Heart right ventricle (tissue), 16 donors: ENCODE measurements at regions of chr3 and their contacts with region 1.

Region 1: DNA sequence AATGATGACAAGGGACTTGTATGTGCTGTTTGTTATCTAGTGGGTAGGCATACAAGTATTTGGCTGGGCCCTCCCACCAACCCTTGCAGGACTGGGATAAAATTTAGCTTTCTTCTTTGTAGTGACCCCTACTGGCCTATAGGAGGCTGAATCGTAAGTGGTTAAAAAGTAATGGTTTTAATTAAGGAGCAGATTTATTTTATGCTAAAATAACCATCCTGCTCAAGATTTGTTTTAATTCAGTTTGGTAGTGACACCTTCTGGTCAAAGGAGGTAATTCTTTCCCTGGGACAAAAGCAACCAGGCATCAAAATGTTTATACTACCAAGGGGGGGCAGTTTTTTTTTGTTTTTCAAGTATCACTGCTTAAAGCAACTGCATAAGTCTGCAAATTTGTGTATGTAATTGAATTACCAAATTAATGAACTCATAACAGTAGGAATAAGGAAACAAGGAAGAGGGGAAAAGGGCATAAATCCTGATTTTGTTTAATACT is 70.7 kb downstream of the TOP2B start:
- DNase-seq: peak in 1 of 2 donors; percentile 27
- ATAC-seq: peak; percentile 49 to 76 (median 55)
- H3K4me3 ChIP-seq: no peak overlapping the region
- H3K27ac ChIP-seq: peak overlapping the region in 8 of 10 donors; percentile 27 to 80 (median 64)
- H3K4me1 ChIP-seq: peaks cover 5 to 50% (median 45%) of the 10 kb centered on the region in 9 donors
- H3K27me3 ChIP-seq: no peaks in the 10 kb centered on the region
- CTCF ChIP-seq: peak; percentile 76 to 90 (median 82)

Region 2: GRCh38 chr3:24963762-24964625 is 630.1 kb before region 1 on chr3:
- intact Hi-C with region 1: loop called in 9 of 10 experiments (anchors 2 to 10 kb)
- DNase-seq: no peak
- ATAC-seq: peak in 1 of 8 donors; percentile 61
- H3K4me3 ChIP-seq: no peak overlapping the region
- H3K27ac ChIP-seq: no peak overlapping the region
- H3K4me1 ChIP-seq: no peaks in the 10 kb centered on the region
- H3K27me3 ChIP-seq: no peaks in the 10 kb centered on the region
- CTCF ChIP-seq: peak in 8 of 9 donors; percentile 44 to 71 (median 64)

Region 3: DNA sequence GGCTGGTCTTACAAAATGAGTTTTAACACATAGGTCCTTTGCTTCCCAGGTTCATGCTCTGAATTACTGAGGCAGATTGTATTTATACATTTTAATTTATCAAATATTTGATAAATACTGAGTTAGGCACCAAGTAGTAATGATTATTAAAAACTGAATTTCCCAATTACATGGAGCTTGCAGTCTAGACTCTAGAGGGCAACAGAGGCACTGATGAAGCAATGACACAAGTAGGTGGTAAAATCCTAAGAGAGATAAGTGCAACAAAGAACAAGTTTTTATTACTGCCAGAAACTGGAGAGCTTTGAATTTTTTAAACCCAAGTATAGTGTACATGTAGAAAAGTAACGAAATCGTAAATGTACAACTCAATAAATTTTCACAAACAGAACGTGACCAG is 572.2 kb before region 1 on chr3:
- intact Hi-C with region 1: loop called in 7 of 10 experiments (anchors 5 to 10 kb)
- DNase-seq: no peak
- ATAC-seq: peak in 4 of 8 donors; percentile 44 to 61 (median 59)
- H3K4me3 ChIP-seq: no peak overlapping the region
- H3K27ac ChIP-seq: no peak overlapping the region
- H3K4me1 ChIP-seq: no peaks in the 10 kb centered on the region
- H3K27me3 ChIP-seq: no peaks in the 10 kb centered on the region
- CTCF ChIP-seq: peak in 8 of 9 donors; percentile 30 to 74 (median 62)

Region 4: GRCh38 chr3:25044762-25045710 is 549.0 kb before region 1 on chr3:
- intact Hi-C with region 1: loop called in 1 of 10 experiments (anchors 10 kb)
- DNase-seq: peak in 1 of 2 donors; percentile 29
- ATAC-seq: peak; percentile 56 to 91 (median 85)
- H3K4me3 ChIP-seq: no peak overlapping the region
- H3K27ac ChIP-seq: peak overlapping the region in 9 of 10 donors; percentile 7 to 72 (median 24)
- H3K4me1 ChIP-seq: peaks cover 0 to 59% (median 27%) of the 10 kb centered on the region in 9 donors
- H3K27me3 ChIP-seq: no peaks in the 10 kb centered on the region
- CTCF ChIP-seq: no peak

Region 5: GRCh38 chr3:25427942-25428788 is 165.9 kb before region 1 on chr3 and contains the start of gene RARB:
- intact Hi-C with region 1: loop called (anchors 2 to 10 kb)
- DNase-seq: peak; percentile 59 to 84
- ATAC-seq: peak; percentile 91 to 95 (median 92)
- H3K4me3 ChIP-seq: peak within 1 kb of the TSS; percentile 56 to 81 (median 65)
- H3K27ac ChIP-seq: peak within 1 kb of the TSS; percentile 79 to 97 (median 94)
- H3K4me1 ChIP-seq: peaks cover 2 to 26% (median 15%) of the 10 kb centered on the region in 9 donors
- H3K27me3 ChIP-seq: peaks cover 0 to 32% (median 0%) of the 10 kb centered on the region in 7 donors
- CTCF ChIP-seq: no peak
- total RNA-seq, gene RARB: 8.6 to 23.2 (median 19.0) TPM

Region 6: DNA sequence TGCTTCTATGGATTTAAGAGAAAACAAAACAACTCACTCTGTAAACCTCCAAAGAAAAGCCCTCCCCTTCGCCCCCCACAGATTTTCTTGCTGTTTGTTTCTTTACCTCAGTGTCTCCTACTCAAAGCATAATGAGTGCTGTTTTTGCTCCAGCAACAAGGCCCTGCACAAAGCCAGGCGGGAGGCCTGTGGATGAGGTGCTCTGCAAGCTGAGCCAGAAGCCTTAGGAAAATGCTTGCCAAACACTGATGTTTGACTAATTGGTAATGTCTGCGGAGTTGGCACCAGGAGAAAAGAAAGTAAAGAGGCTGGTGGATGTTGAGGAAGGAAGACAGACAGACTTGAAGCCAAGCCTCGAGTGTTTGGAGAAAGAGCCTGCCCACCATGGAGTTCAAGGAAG is 66.3 kb before region 1 on chr3:
- intact Hi-C with region 1: loop called in 1 of 10 experiments (anchors 5 kb)
- DNase-seq: no peak
- ATAC-seq: peak in 6 of 8 donors; percentile 41 to 74 (median 61)
- H3K4me3 ChIP-seq: no peak overlapping the region
- H3K27ac ChIP-seq: peak overlapping the region in 1 of 10 donors; percentile 24
- H3K4me1 ChIP-seq: peaks cover 0 to 45% (median 28%) of the 10 kb centered on the region in 9 donors
- H3K27me3 ChIP-seq: no peaks in the 10 kb centered on the region
- CTCF ChIP-seq: no peak

Region 7: DNA sequence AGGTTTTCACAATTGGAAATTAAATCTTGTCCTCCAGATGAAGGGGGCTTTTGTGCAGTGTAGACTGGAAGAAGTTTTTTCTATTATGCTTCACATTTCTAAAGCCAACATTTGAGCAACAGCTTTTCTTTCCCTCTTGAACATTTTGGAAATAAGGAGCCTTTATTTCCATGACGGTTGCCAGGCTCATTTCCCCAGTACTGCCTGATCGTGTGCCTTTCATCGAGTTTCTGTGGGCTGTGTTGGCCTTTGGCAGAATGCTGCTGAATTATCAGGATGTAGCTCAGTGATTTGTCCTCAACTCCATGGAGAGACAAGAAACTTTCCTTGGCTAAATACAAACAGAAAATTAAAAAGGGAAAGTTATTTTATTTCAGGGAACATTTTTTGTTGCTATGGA is 713.7 kb after region 1 on chr3:
- intact Hi-C with region 1: no loop called
- DNase-seq: peak in 1 of 2 donors; percentile 26
- ATAC-seq: peak in 5 of 8 donors; percentile 46 to 76 (median 64)
- H3K4me3 ChIP-seq: no peak overlapping the region
- H3K27ac ChIP-seq: no peak overlapping the region
- H3K4me1 ChIP-seq: peaks cover 0 to 8% (median 0%) of the 10 kb centered on the region in 9 donors
- H3K27me3 ChIP-seq: no peaks in the 10 kb centered on the region
- CTCF ChIP-seq: no peak